CD4-positive, alpha-beta memory T cell (primary cell): ENCODE measurements at regions of chr17 and their contacts with region 1.

Region 1: DNA sequence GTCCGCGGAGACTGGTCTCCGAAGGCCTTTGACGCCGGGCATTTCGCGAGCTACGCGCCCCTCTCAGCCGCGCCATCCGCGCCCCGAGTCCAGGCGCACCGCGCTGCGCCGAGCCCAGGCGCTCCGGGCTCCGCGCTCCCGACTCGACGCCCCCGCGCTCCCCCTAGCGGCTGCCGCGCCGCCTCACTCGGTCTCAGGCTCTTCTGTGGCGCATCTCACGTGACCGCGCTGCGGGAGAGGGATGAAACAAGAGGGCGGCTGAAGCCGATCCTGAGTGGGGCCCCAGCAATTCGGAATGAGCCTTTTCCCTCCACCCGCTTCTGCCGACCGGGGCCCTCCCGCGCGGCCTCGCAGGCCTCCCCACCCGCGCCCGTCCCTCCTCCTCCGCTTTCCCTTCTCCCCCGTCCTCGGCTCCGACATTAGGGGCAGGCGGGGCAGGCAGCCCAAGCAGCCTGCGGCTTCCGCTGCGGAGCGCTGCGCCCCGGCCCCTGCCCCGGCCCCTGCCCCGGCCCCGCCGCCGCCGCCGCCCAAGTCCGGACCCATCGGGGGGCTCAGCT is 42.5 kb upstream of the AMZ2 start:
- DNase-seq: peak; percentile 88 to 94 (median 89)
- H3K4me3 ChIP-seq: peak overlapping the region in 1 of 2 donors; percentile 65
- H3K4me3 Mint-ChIP-seq: peak overlapping the region; percentile 79 to 93 (median 89)
- H3K27ac ChIP-seq: peak overlapping the region; percentile 72
- H3K27ac Mint-ChIP-seq: peak overlapping the region; percentile 74 to 94 (median 92)
- H3K4me1 ChIP-seq: peaks cover 43% of the 10 kb centered on the region
- H3K4me1 Mint-ChIP-seq: peaks cover 20 to 49% (median 33%) of the 10 kb centered on the region in 4 donors
- H3K27me3 ChIP-seq: no peaks in the 10 kb centered on the region
- H3K27me3 Mint-ChIP-seq: no peaks in the 10 kb centered on the region

Region 2: GRCh38 chr17:68101075-68101992 is 104.0 kb before region 1 on chr17:
- CTCF ChIA-PET with region 1: no interaction called
- POLR2A ChIA-PET with region 1: no interaction called
- intact Hi-C with region 1: loop called (anchors 5 kb)
- DNase-seq: peak; percentile 43 to 65 (median 62)
- H3K4me3 ChIP-seq: peak overlapping the region; percentile 42 to 48
- H3K4me3 Mint-ChIP-seq: peak overlapping the region; percentile 94 to 98 (median 96)
- H3K27ac ChIP-seq: peak overlapping the region; percentile 73
- H3K27ac Mint-ChIP-seq: peak overlapping the region; percentile 91 to 98 (median 96)
- H3K4me1 ChIP-seq: peaks cover 23% of the 10 kb centered on the region
- H3K4me1 Mint-ChIP-seq: peaks cover 25 to 53% (median 37%) of the 10 kb centered on the region in 4 donors
- H3K27me3 ChIP-seq: no peaks in the 10 kb centered on the region
- H3K27me3 Mint-ChIP-seq: no peaks in the 10 kb centered on the region

Region 3: GRCh38 chr17:68155692-68156091 is 49.6 kb before region 1 on chr17:
- CTCF ChIA-PET with region 1: no interaction called
- POLR2A ChIA-PET with region 1: no interaction called
- intact Hi-C with region 1: no loop called
- DNase-seq: no peak
- H3K4me3 ChIP-seq: no peak overlapping the region
- H3K4me3 Mint-ChIP-seq: no peak overlapping the region
- H3K27ac ChIP-seq: no peak overlapping the region
- H3K27ac Mint-ChIP-seq: no peak overlapping the region
- H3K4me1 ChIP-seq: no peaks in the 10 kb centered on the region
- H3K4me1 Mint-ChIP-seq: peaks cover 0 to 2% (median 0%) of the 10 kb centered on the region in 4 donors
- H3K27me3 ChIP-seq: no peaks in the 10 kb centered on the region
- H3K27me3 Mint-ChIP-seq: no peaks in the 10 kb centered on the region

Region 4: GRCh38 chr17:68179236-68179925 is 25.9 kb before region 1 on chr17:
- CTCF ChIA-PET with region 1: interaction called, 270 read pairs
- POLR2A ChIA-PET with region 1: interaction called, 330 read pairs
- intact Hi-C with region 1: loop called (anchors 1 kb)
- DNase-seq: no peak
- H3K4me3 ChIP-seq: no peak overlapping the region
- H3K4me3 Mint-ChIP-seq: no peak overlapping the region
- H3K27ac ChIP-seq: no peak overlapping the region
- H3K27ac Mint-ChIP-seq: peak overlapping the region in 2 of 7 donors; percentile 40 to 56
- H3K4me1 ChIP-seq: peaks cover 33% of the 10 kb centered on the region
- H3K4me1 Mint-ChIP-seq: peaks cover 17 to 46% (median 30%) of the 10 kb centered on the region in 4 donors
- H3K27me3 ChIP-seq: no peaks in the 10 kb centered on the region
- H3K27me3 Mint-ChIP-seq: no peaks in the 10 kb centered on the region

Region 5: GRCh38 chr17:68238164-68238872 is 33.0 kb after region 1 on chr17:
- CTCF ChIA-PET with region 1: interaction called, 13 read pairs
- POLR2A ChIA-PET with region 1: interaction called, 47 read pairs
- intact Hi-C with region 1: loop called (anchors 2 kb)
- DNase-seq: peak; percentile 53 to 84 (median 63)
- H3K4me3 ChIP-seq: peak overlapping the region; percentile 45 to 61
- H3K4me3 Mint-ChIP-seq: peak overlapping the region; percentile 80 to 92 (median 86)
- H3K27ac ChIP-seq: peak overlapping the region; percentile 93
- H3K27ac Mint-ChIP-seq: peak overlapping the region; percentile 92 to 100 (median 97)
- H3K4me1 ChIP-seq: peaks cover 58% of the 10 kb centered on the region
- H3K4me1 Mint-ChIP-seq: peaks cover 47 to 67% (median 54%) of the 10 kb centered on the region in 4 donors
- H3K27me3 ChIP-seq: no peaks in the 10 kb centered on the region
- H3K27me3 Mint-ChIP-seq: no peaks in the 10 kb centered on the region

Region 6: DNA sequence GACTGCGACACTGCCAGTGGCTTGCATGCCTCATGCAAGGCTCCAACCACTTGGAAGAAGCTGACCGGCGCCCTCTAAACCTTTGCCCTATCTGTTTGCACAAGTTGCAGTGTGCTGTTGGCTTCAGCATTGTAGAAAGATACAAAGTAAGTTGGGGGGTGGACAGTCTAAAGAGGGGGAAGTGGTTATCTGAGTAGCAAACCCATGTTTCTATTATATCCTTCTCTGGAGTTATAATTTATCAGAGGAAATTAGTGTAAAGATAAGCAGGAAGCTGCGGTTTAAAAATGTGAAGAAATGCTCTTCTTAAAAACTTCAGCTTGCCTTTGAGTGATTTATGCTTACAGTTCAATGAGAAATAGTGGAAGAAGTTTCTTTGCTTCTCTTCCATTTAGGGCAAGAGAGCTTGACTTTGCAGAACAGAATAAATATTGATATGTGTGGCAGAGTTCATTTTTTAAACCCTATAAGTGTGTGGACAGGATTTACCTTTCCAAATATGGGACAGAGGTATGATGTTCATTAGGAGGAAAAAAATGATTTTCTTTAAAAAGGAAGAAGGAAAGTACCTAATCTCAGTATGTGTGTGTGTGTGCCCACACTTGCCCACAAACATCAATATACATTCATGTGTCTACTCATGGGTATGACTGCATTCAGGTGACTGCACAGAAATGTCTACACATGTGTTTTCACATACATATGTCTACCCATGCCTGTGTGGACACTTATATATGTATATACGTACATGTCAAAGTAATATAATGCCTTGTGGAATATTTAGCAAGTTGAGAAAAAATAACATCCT is 50.6 kb after region 1 on chr17:
- CTCF ChIA-PET with region 1: interaction called, 6 read pairs
- POLR2A ChIA-PET with region 1: interaction called, 8 read pairs
- intact Hi-C with region 1: loop called (anchors 1 kb)
- DNase-seq: peak; percentile 50 to 73 (median 60)
- H3K4me3 ChIP-seq: no peak overlapping the region
- H3K4me3 Mint-ChIP-seq: peak overlapping the region; percentile 46 to 73 (median 66)
- H3K27ac ChIP-seq: peak overlapping the region; percentile 88
- H3K27ac Mint-ChIP-seq: peak overlapping the region; percentile 81 to 99 (median 98)
- H3K4me1 ChIP-seq: peaks cover 86% of the 10 kb centered on the region
- H3K4me1 Mint-ChIP-seq: peaks cover 61 to 85% (median 72%) of the 10 kb centered on the region in 4 donors
- H3K27me3 ChIP-seq: no peaks in the 10 kb centered on the region
- H3K27me3 Mint-ChIP-seq: no peaks in the 10 kb centered on the region

Region 7: DNA sequence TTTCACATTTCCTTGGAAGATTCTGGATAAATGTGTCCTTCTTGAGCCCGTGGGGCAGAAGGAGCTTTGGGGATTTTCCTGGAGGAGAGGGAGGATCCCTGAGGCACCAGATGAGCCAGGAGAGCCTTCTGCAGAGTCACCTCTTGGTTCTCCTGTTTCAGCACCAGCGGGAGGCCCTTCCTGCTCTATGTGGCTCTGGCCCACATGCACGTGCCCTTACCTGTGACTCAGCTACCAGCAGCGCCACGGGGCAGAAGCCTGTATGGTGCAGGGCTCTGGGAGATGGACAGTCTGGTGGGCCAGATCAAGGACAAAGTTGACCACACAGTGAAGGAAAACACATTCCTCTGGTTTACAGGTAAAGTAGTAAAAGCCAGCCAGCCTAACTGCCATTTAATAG is 163.1 kb after region 1 on chr17:
- CTCF ChIA-PET with region 1: no interaction called
- POLR2A ChIA-PET with region 1: no interaction called
- intact Hi-C with region 1: no loop called
- DNase-seq: no peak
- H3K4me3 ChIP-seq: no peak overlapping the region
- H3K4me3 Mint-ChIP-seq: no peak overlapping the region
- H3K27ac ChIP-seq: no peak overlapping the region
- H3K27ac Mint-ChIP-seq: no peak overlapping the region
- H3K4me1 ChIP-seq: no peaks in the 10 kb centered on the region
- H3K4me1 Mint-ChIP-seq: peaks cover 0 to 1% (median 0%) of the 10 kb centered on the region in 4 donors
- H3K27me3 ChIP-seq: no peaks in the 10 kb centered on the region
- H3K27me3 Mint-ChIP-seq: no peaks in the 10 kb centered on the region